Common myeloid progenitor, CD34-positive (primary cell): ENCODE measurements at regions of chr19 and their contacts with region 1.

Region 1: DNA sequence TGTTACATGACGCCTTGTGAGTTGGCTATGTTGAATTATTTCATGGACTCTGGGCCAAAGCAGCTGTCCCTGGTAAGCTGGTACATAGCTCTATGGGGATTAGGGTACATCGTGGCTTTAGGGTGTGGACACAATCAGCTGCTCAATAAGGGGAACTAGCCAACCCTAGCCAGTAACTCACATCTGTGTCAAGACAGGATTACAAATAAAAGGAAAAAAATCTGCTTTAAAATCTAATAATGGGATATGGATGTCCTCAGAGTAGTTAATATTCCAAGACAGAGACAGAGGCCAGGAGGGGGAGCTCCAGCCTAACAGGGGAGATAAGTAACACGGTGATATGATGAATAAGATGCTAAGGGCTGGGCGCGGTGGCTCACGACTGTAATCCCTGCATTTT is 21.1 kb upstream of the ZNF766 start:
- DNase-seq: peak; percentile 76 to 85 (median 80)
- H3K4me3 ChIP-seq: no peak overlapping the region
- H3K27ac ChIP-seq: no peak overlapping the region
- H3K4me1 ChIP-seq: no peaks in the 10 kb centered on the region
- H3K27me3 ChIP-seq: no peaks in the 10 kb centered on the region

Region 2: GRCh38 chr19:52748336-52748950 is 500.2 kb after region 1 on chr19:
- CTCF ChIA-PET with region 1: interaction called, 10 read pairs
- POLR2A ChIA-PET with region 1: no interaction called
- DNase-seq: peak; percentile 49 to 74 (median 71)
- H3K4me3 ChIP-seq: peak overlapping the region in 1 of 7 experiments; percentile 18
- H3K27ac ChIP-seq: no peak overlapping the region
- H3K4me1 ChIP-seq: peaks cover 0 to 5% (median 0%) of the 10 kb centered on the region in 4 experiments
- H3K27me3 ChIP-seq: no peaks in the 10 kb centered on the region